H1 (cell line): ENCODE measurements at regions of chr9 and their contacts with region 1.

Region 1: GRCh38 chr9:107137495-107138202 is 145.4 kb upstream of the RAD23B start:
- DNase-seq: no peak
- H3K4me3 ChIP-seq: no peak overlapping the region
- H3K27ac ChIP-seq: no peak overlapping the region
- H3K4me1 ChIP-seq: no peaks in the 10 kb centered on the region
- H3K27me3 ChIP-seq: no peaks in the 10 kb centered on the region
- CTCF ChIP-seq: peak in 2 of 3 experiments; percentile 65 to 82; a peak in 3 of 4 replicates
- EP300 ChIP-seq: no peak
- POLR2A ChIP-seq: no peak
- RAD21 ChIP-seq: peak; percentile 64 to 79

Region 2: DNA sequence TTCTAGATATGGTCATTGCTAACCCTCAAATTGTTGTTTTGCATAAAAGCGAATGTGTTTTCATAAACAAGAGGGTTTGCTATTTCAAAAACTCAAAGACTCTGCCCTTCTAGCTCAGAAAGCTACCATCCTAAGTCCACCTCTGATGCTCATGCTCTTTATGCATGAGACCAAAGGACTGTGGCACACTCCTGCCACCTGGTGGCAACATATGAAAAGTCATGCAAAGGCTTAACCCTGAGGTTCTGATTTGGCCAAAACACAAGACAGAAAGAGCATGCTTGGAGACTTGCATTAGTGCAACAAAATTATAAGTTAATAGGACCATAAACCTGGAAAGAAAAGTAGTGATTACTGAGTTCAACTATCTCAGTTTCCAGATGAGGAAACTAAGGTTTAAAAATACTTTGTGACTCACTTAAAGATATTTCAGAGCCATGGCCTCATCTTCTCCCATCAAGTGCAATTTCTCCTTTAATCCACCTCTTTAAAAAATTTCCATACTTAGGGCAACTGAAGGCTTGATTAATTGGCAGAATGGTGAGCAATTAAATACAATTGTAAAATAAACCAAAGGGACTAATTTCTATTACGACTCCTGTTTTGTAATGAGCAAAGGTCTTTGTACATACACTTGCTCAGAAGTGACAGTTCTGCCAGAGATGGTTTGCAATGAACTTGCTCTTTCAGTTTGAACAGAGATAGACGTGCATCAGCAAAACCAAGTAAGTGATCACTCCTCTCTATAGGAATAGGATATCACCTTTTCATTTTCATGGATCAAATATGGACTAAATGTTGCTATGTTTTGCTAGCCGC is 34.7 kb after region 1 on chr9:
- CTCF ChIA-PET with region 1: interaction called, 62 read pairs
- POLR2A ChIA-PET with region 1: no interaction called
- DNase-seq: peak; percentile 41 to 80
- H3K4me3 ChIP-seq: no peak overlapping the region
- H3K27ac ChIP-seq: no peak overlapping the region
- H3K4me1 ChIP-seq: peaks cover 0 to 6% (median under 1%) of the 10 kb centered on the region in 4 experiments; a peak in 1 of 7 replicates
- H3K27me3 ChIP-seq: no peaks in the 10 kb centered on the region
- CTCF ChIP-seq: peak; percentile 32 to 91 (median 85)
- EP300 ChIP-seq: no peak
- POLR2A ChIP-seq: no peak
- RAD21 ChIP-seq: peak; percentile 94 to 95